CD8-positive, alpha-beta memory T cell (primary cell): ENCODE measurements at regions of chr2 and their contacts with region 1.

Region 1: GRCh38 chr2:203814661-203815540 is 52.7 kb upstream of the CTLA4 start:
- DNase-seq: peak; percentile 14 to 68 (median 57)
- H3K4me3 ChIP-seq: peak overlapping the region; percentile 31
- H3K4me3 Mint-ChIP-seq: peak overlapping the region in 5 of 7 donors; percentile 64 to 74 (median 72)
- H3K27ac ChIP-seq: no peak overlapping the region
- H3K27ac Mint-ChIP-seq: peak overlapping the region in 5 of 8 donors; percentile 24 to 89 (median 68)
- H3K4me1 ChIP-seq: peaks cover 30% of the 10 kb centered on the region
- H3K4me1 Mint-ChIP-seq: peaks cover 35 to 46% (median 45%) of the 10 kb centered on the region in 3 donors
- H3K27me3 ChIP-seq: no peaks in the 10 kb centered on the region
- H3K27me3 Mint-ChIP-seq: peaks cover 0 to 8% of the 10 kb centered on the region in 2 donors

Region 2: GRCh38 chr2:203476881-203477280 is 338.0 kb before region 1 on chr2:
- CTCF ChIA-PET with region 1: interaction called, 38 read pairs
- POLR2A ChIA-PET with region 1: no interaction called
- DNase-seq: no peak
- H3K4me3 ChIP-seq: no peak overlapping the region
- H3K4me3 Mint-ChIP-seq: no peak overlapping the region
- H3K27ac ChIP-seq: no peak overlapping the region
- H3K27ac Mint-ChIP-seq: no peak overlapping the region
- H3K4me1 ChIP-seq: no peaks in the 10 kb centered on the region
- H3K4me1 Mint-ChIP-seq: no peaks in the 10 kb centered on the region
- H3K27me3 ChIP-seq: no peaks in the 10 kb centered on the region
- H3K27me3 Mint-ChIP-seq: no peaks in the 10 kb centered on the region

Region 3: DNA sequence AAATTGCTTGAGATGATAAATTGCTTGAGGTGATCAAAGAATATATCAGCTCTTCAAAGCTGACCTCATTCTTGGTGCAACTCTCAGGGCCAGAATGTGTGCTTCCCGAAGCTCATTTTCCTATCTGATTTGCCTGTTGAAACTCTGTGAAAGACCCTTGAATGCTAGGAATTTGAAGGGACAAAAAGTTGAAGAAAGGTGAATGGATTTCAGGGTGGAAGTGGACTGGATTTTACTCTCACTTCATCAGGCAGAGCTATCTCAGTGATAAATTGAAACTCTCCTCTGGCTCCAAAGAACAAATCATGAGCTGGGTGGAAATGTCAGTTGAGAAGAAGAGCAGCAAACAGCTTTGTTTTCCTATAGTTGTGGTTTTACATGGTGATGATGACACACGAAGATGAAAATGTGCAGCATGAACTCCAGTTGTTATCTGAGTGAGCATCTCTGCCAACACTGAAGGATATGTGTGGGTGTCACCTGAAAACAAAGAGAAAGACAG is 74.1 kb before region 1 on chr2:
- CTCF ChIA-PET with region 1: interaction called, 13 read pairs
- POLR2A ChIA-PET with region 1: interaction called, 3 read pairs
- DNase-seq: peak in 3 of 5 donors; percentile 59 to 85 (median 77)
- H3K4me3 ChIP-seq: peak overlapping the region; percentile 29
- H3K4me3 Mint-ChIP-seq: peak overlapping the region; percentile 7 to 75 (median 65)
- H3K27ac ChIP-seq: peak overlapping the region; percentile 52
- H3K27ac Mint-ChIP-seq: peak overlapping the region; percentile 79 to 97 (median 93)
- H3K4me1 ChIP-seq: peaks cover 81% of the 10 kb centered on the region
- H3K4me1 Mint-ChIP-seq: peaks cover 71 to 90% (median 82%) of the 10 kb centered on the region in 3 donors
- H3K27me3 ChIP-seq: no peaks in the 10 kb centered on the region
- H3K27me3 Mint-ChIP-seq: no peaks in the 10 kb centered on the region

Region 4: DNA sequence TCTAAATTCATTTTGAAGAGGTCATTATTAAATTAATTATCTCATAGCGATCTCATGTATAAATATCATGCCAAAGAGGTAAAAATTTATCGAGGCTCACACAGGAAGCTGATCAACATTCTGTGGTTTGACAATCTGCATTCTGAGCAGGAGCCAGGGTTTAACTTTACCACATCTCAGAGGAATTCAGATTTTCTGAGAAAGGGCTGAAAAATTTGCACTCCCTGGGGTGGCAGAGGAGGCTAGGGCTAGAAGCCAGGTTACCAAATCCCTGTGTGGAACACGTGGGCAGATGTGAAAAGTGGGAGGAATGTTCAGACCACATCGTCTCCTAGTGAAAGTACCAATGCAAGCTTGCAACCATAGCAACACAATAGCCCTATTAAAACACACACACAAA is 10.8 kb before region 1 on chr2:
- CTCF ChIA-PET with region 1: interaction called, 11 read pairs
- POLR2A ChIA-PET with region 1: no interaction called
- DNase-seq: peak in 2 of 5 donors; percentile 31 to 36
- H3K4me3 ChIP-seq: no peak overlapping the region
- H3K4me3 Mint-ChIP-seq: peak overlapping the region; percentile 20 to 42 (median 28)
- H3K27ac ChIP-seq: peak overlapping the region; percentile 12
- H3K27ac Mint-ChIP-seq: peak overlapping the region; percentile 5 to 83 (median 58)
- H3K4me1 ChIP-seq: peaks cover 35% of the 10 kb centered on the region
- H3K4me1 Mint-ChIP-seq: peaks cover 40 to 65% (median 60%) of the 10 kb centered on the region in 3 donors
- H3K27me3 ChIP-seq: no peaks in the 10 kb centered on the region
- H3K27me3 Mint-ChIP-seq: no peaks in the 10 kb centered on the region